ENCODE measurements at regions of chr19 and their contacts with region 1.

Region 1: GRCh38 chr19:48290771-48291488 is 21.0 kb downstream of the ZNF114 start:
- DNase-seq: peak; percentile 88 to 94 (median 94)
- ATAC-seq: peak; percentile 89 to 90
- H3K4me3 ChIP-seq: peak overlapping the region; percentile 46
- H3K27ac ChIP-seq: no peak overlapping the region
- H3K4me1 ChIP-seq: no peaks in the 10 kb centered on the region
- H3K27me3 ChIP-seq: no peaks in the 10 kb centered on the region

Region 2: GRCh38 chr19:48135411-48135810 is 155.5 kb before region 1 on chr19:
- intact Hi-C with region 1: no loop called
- DNase-seq: peak in 1 of 3 donors; percentile 46
- ATAC-seq: no peak
- H3K4me3 ChIP-seq: no peak overlapping the region
- H3K27ac ChIP-seq: no peak overlapping the region
- H3K4me1 ChIP-seq: no peaks in the 10 kb centered on the region
- H3K27me3 ChIP-seq: no peaks in the 10 kb centered on the region

Region 3: GRCh38 chr19:48255376-48256303 is 35.3 kb before region 1 on chr19 and contains the start of gene CARD8:
- intact Hi-C with region 1: no loop called
- DNase-seq: peak; percentile 80 to 93 (median 88)
- ATAC-seq: peak; percentile 93 to 97
- H3K4me3 ChIP-seq: peak within 1 kb of the TSS; percentile 87
- H3K27ac ChIP-seq: peak within 1 kb of the TSS; percentile 99
- H3K4me1 ChIP-seq: no peaks in the 10 kb centered on the region
- H3K27me3 ChIP-seq: no peaks in the 10 kb centered on the region
- total RNA-seq, gene CARD8: 32.6 to 43.3 (median 33.3) TPM

Region 4: GRCh38 chr19:48271531-48272151 is 19.3 kb before region 1 on chr19:
- intact Hi-C with region 1: loop called in 2 of 4 experiments (anchors 2 kb)
- DNase-seq: peak; percentile 56 to 77 (median 75)
- ATAC-seq: peak; percentile 78 to 83
- H3K4me3 ChIP-seq: peak overlapping the region; percentile 73
- H3K27ac ChIP-seq: peak overlapping the region; percentile 59
- H3K4me1 ChIP-seq: no peaks in the 10 kb centered on the region
- H3K27me3 ChIP-seq: no peaks in the 10 kb centered on the region

Region 5: DNA sequence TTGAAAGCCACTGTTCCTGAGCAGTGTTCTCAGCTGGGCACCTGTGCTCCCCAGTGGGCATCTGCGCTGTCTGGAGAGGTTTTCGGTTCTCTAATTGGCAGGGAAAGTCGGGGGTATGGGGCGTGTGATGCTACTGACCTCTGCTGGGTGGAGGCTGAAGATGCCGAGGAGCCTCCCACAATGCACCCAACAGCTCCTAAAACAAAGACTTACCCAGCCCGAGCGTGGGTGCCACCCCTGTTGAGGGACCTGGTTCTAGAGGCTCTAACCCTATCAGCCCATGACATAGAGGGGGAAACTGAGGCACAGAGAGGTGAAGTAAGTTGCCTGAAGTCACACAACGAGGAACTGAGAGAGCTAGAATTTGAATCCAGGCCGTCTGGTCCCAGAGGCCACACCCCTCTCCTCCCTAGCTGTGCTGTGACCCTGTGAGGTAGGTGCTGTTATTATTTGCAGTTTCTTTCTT is 317.9 kb after region 1 on chr19:
- intact Hi-C with region 1: no loop called
- DNase-seq: peak in 1 of 3 donors; percentile 70
- ATAC-seq: peak; percentile 17 to 22
- H3K4me3 ChIP-seq: no peak overlapping the region
- H3K27ac ChIP-seq: no peak overlapping the region
- H3K4me1 ChIP-seq: no peaks in the 10 kb centered on the region
- H3K27me3 ChIP-seq: no peaks in the 10 kb centered on the region